HepG2 (cell line): ENCODE measurements at regions of chr19 and their contacts with region 1.

Region 1: DNA sequence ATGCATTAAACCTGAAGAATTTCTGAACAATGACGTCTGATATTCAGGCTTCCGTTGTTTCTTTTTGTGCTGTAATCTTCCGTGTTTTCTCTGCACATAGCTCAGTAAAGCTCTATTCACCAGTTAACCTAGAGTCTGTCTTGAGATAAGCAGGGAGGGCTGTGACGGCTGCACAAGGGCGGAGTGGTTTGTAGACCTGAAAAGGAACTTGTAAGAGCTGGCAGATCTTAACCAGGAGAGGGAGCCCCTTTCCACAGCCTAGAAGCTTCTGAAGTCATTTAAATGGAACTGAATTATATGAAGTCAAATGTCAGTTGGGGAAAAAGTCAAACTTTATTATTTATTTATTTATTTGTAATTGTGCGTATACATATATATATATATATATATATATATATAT is 27.5 kb downstream of the DPRX start:
- DNase-seq: peak; percentile 65
- ATAC-seq: no peak
- H3K4me3 ChIP-seq: no peak overlapping the region
- H3K27ac ChIP-seq: peak overlapping the region; percentile 58
- H3K4me1 ChIP-seq: peaks cover 71% of the 10 kb centered on the region
- H3K27me3 ChIP-seq: no peaks in the 10 kb centered on the region
- CTCF ChIP-seq: peak; percentile 60
- EP300 ChIP-seq: no peak
- POLR2A ChIP-seq: no peak
- RAD21 ChIP-seq: no peak; the same call in 1 of the 2 replicates

Region 2: DNA sequence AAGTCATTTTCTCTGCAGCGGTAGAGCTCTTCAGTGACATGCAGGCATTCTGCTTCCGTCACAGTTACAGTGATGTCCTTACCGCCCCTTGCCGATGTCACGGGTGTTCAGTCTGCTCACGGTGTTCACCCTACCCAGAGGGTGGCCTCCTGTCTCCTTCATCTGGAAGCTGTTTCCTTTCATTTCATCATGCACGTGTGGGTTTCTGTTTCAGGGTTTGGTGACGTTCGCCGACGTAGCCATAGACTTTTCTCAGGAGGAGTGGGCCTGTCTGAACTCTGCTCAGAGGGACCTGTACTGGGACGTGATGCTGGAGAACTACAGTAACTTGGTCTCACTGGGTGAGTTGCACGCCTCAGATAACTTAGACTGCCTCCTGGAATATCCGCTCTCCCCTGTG is 87.9 kb before region 1 on chr19:
- CTCF ChIA-PET with region 1: no interaction called
- POLR2A ChIA-PET with region 1: no interaction called
- in situ Hi-C with region 1: no loop called
- intact Hi-C with region 1: no loop called
- DNase-seq: no peak
- ATAC-seq: no peak
- H3K4me3 ChIP-seq: no peak overlapping the region
- H3K27ac ChIP-seq: no peak overlapping the region
- H3K4me1 ChIP-seq: peaks cover 30% of the 10 kb centered on the region
- H3K27me3 ChIP-seq: no peaks in the 10 kb centered on the region
- CTCF ChIP-seq: no peak
- EP300 ChIP-seq: no peak
- POLR2A ChIP-seq: no peak
- RAD21 ChIP-seq: no peak

Region 3: GRCh38 chr19:53597023-53597422 is 62.3 kb before region 1 on chr19:
- CTCF ChIA-PET with region 1: no interaction called
- POLR2A ChIA-PET with region 1: no interaction called
- in situ Hi-C with region 1: loop called (anchors 10 kb)
- intact Hi-C with region 1: loop called (anchors 10 kb)
- DNase-seq: peak; percentile 63
- ATAC-seq: peak; percentile 53; the same call in 2 of the 3 replicates
- H3K4me3 ChIP-seq: no peak overlapping the region
- H3K27ac ChIP-seq: no peak overlapping the region
- H3K4me1 ChIP-seq: peaks cover 46% of the 10 kb centered on the region
- H3K27me3 ChIP-seq: no peaks in the 10 kb centered on the region
- CTCF ChIP-seq: no peak
- EP300 ChIP-seq: peak in 1 of 2 experiments; percentile 50; a peak in 1 of 4 replicates
- POLR2A ChIP-seq: no peak
- RAD21 ChIP-seq: no peak

Region 4: DNA sequence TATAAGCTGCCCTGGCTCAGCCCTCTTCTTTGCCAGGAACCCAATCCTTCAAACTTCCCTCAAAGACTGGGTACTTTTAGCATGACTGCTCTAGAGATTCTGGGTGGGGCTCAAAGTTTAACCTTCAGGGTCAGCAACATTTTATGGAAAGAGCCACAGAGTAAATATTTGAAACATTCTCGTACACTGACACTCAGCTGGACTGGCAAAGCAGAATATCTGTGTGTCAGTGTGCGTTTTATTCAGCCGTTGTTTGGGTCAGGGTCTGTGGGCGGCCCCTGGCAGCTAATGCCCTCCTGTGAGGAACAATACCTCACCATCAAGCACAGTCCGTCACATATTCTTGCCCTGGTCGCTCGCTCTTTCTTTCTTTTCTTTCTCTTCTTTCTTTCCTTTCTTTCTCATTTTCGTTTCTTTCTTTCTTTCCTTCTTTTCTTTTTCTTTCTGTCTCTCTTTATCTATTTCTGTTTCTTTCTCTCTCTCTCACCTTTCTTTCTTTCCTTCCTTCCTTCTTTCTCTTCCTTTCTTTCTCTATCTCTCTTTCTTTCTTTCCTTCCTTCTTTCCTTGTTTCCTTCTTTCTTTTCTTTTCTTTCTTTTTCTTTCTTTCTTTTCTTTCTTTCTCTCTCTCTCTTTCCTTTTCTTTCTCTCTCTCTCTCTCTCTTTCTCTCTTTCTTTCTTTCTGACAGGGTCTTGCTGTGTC is 16.8 kb before region 1 on chr19:
- CTCF ChIA-PET with region 1: no interaction called
- POLR2A ChIA-PET with region 1: no interaction called
- in situ Hi-C with region 1: no loop called
- intact Hi-C with region 1: loop called (anchors 2 kb)
- DNase-seq: peak; percentile 87
- ATAC-seq: peak; percentile 84
- H3K4me3 ChIP-seq: peak overlapping the region in 1 of 3 experiments; percentile 20; a peak in 1 of 6 replicates
- H3K27ac ChIP-seq: peak overlapping the region; percentile 55
- H3K4me1 ChIP-seq: peaks cover 65% of the 10 kb centered on the region
- H3K27me3 ChIP-seq: no peaks in the 10 kb centered on the region
- CTCF ChIP-seq: no peak
- EP300 ChIP-seq: peak in 1 of 2 experiments; percentile 35; a peak in 1 of 4 replicates
- POLR2A ChIP-seq: no peak
- RAD21 ChIP-seq: no peak